ENCODE measurements at regions of chr17 and their contacts with region 1.

Region 1: DNA sequence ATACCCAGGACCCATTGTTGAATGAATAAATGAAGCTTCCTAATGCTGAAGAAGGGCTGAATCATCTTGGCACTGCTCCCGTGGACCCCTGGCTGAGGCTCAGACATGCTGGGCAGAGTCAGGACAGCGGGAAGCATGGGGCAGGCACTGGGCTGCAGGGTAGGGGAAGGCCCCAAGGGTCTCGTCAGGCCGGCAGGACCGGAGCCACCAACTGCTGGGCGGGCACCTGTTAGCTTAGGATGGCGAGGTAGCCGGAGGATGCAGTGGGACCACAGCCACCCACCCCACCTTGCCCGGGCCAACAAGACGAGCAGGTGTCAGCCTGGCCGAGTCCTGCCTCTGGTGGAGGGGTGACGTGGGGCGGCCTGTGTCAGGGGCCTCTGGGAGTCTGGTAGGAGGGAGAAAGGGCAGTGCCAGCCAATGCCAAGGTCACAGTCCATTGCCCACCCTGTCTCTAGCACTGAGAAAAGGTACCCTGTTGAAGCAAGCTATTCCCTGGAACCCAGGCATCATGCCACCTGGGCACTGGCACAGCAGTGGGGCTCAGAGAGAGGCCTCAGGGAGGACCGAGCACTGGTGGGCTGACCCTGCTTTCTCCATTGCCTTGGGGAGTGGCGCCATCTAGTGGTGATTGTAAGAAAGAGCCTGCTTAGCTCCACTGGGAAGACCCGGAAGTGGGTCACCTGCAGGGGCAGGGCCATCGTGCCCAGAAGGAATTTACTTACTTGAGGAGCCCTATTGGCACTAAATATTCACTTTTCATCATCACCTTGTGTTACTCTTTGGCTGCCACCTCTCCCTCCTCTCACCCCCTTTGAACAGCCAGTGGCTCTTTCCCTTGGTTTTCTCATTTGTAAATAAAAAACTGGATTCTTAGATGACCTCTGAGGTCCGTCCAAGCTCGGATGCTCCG is 3.0 kb upstream of the DLX3 start:
- DNase-seq: peak; percentile 63 to 77 (median 75)
- ATAC-seq: peak; percentile 87
- H3K4me3 ChIP-seq: no peak overlapping the region
- H3K4me1 ChIP-seq: peaks cover 18% of the 10 kb centered on the region
- CTCF ChIP-seq: peak; percentile 90

Region 2: GRCh38 chr17:49567871-49568694 is 430.0 kb before region 1 on chr17:
- intact Hi-C with region 1: loop called in 1 of 2 experiments (anchors 10 kb)
- DNase-seq: peak; percentile 87 to 90 (median 89)
- ATAC-seq: peak; percentile 81
- H3K4me3 ChIP-seq: no peak overlapping the region
- H3K4me1 ChIP-seq: peaks cover 4% of the 10 kb centered on the region
- CTCF ChIP-seq: peak; percentile 97

Region 3: DNA sequence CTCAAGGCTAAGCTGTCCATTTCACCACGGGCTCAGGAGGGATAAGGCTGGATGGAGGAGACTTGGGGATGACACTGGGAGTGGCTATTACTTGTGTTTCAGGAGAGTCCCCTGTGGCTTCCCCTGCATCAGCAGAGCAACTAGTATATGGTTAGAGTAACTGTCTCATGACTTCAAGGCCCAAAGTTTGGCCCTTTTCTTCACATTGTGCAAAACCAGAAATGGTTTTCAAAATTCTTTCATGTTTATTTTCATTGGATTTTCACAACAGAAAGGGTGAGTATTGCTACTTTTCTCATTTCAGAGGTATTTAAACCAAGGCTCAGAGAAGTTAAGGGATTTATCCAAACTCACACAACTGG is 132.0 kb before region 1 on chr17:
- intact Hi-C with region 1: loop called in 1 of 2 experiments (anchors 5 kb)
- DNase-seq: no peak
- ATAC-seq: no peak
- H3K4me3 ChIP-seq: no peak overlapping the region
- H3K4me1 ChIP-seq: no peaks in the 10 kb centered on the region
- CTCF ChIP-seq: no peak

Region 4: GRCh38 chr17:49875685-49876084 is 122.4 kb before region 1 on chr17:
- intact Hi-C with region 1: loop called in 1 of 2 experiments (anchors 5 kb)
- DNase-seq: peak in 1 of 3 donors; percentile 38
- ATAC-seq: no peak
- H3K4me3 ChIP-seq: no peak overlapping the region
- H3K4me1 ChIP-seq: peaks cover 4% of the 10 kb centered on the region
- CTCF ChIP-seq: no peak

Region 5: DNA sequence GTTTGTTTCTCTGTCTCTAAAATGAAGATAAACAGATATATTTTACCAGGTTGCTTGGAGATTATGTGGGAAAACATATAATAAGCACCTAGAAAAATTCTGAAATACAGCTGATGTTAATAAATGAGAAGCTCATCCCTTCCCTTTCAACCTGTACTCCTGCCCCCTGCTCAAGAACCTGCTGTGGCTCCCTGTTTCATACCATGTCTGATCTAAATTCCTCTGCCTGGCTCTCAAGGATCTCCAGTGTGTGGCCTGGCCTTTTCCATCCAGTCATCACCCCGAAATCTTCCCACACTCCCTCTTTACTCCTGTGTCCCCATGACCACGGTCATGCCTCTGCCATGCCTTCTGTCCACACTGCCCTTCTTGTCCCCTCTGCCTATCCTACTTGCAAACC is 48.4 kb before region 1 on chr17:
- intact Hi-C with region 1: loop called in 1 of 2 experiments (anchors 2 kb)
- DNase-seq: no peak
- ATAC-seq: no peak
- H3K4me3 ChIP-seq: no peak overlapping the region
- H3K4me1 ChIP-seq: no peaks in the 10 kb centered on the region
- CTCF ChIP-seq: no peak

Region 6: GRCh38 chr17:50161023-50161910 is 163.2 kb after region 1 on chr17:
- intact Hi-C with region 1: no loop called
- DNase-seq: peak; percentile 90 to 96 (median 93)
- ATAC-seq: peak; percentile 99
- H3K4me3 ChIP-seq: no peak overlapping the region
- H3K4me1 ChIP-seq: peaks cover 4% of the 10 kb centered on the region
- CTCF ChIP-seq: peak; percentile 95

Region 7: DNA sequence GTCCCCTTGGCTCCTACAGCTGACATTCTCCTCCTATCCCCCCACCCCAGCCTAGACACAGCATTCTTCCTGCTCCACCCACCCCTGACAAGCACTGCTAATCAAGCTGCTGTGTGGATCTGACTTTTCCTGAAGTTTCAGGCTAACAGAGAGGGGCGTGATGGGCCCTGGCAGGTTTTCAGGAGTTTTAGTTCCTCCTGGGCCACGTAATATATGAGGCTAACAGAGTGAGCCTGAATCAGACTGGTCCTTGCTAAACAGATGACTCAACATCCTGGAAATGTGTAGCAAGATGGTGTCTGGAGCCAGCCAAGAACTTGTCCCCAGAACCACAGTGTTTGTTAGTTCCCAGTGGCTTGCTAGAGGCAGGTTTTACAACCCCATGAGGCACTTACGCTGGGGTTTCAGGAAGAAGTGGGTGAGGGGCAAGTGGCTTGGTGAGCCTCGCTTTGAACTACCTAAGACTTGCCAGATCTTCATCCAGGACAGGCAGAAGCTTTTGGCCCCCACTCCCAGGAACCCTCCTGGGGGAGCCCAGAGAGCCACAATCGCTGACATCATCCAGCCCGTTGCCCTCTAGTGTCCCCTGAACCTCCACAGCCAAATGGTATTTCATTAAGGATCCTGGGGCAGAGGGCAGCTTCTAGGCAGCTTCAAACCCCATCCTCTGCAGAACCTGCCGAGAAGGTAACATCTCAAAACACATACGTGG is 292.1 kb after region 1 on chr17:
- intact Hi-C with region 1: no loop called
- DNase-seq: peak; percentile 31 to 74 (median 62)
- ATAC-seq: peak; percentile 95
- H3K4me3 ChIP-seq: no peak overlapping the region
- H3K4me1 ChIP-seq: peaks cover 4% of the 10 kb centered on the region
- CTCF ChIP-seq: no peak